GM12878 (cell line): ENCODE measurements at regions of chr11 and their contacts with region 1.

Region 1: DNA sequence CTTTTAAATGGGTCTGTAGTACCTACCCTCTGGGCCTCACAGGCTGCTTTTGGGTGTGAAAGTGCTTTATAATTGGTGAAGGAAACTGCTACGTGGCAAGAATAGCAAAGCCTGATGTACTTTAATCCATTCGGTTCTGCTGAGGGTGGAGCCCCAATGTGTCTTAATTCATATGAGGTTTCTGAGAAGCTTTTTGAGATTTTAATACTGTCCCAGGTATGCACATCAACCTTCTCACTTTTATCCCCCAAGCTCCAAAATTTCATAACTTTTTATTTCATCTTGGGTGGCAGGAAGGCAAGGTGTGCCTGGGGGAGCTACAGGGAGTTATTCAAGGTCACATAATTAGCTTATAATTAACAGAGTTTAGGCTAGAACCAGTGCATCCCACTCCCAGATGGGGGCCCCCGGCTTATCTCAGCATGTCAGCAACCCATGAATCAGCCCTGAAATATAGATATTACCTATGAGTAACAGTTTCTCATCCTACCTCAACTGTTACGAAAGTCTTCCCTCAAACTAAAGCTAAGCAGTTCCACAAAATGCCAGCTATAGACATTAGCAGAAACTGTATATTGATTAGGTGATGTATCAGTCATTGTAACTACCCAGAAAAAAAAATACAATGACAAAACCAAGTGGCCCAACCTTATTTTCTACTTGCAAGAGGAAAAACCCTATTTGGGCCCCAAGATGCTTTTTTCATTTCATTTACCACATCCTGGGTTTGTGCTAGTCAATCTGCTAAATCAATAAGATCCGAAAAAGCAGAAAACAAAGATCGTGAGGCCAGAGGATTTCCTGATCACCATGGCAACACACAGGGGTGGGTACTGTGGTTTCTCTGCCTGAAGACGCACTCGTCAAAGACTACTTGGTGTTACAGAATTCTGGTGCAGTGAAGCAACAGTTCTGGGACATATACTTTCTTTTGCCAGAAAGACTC is 26.7 kb downstream of the CD44 start:
- DNase-seq: peak; percentile 99
- ATAC-seq: peak; percentile 85
- H3K4me3 ChIP-seq: peak overlapping the region; percentile 53
- H3K27ac ChIP-seq: peak overlapping the region; percentile 72
- H3K4me1 ChIP-seq: peaks cover 54% of the 10 kb centered on the region
- H3K27me3 ChIP-seq: no peaks in the 10 kb centered on the region
- CTCF ChIP-seq: no peak
- EP300 ChIP-seq: peak; percentile 60 to 86; a peak in 3 of 4 replicates
- POLR2A ChIP-seq: peak; percentile 41; the same call in 1 of the 2 replicates
- RAD21 ChIP-seq: no peak

Region 2: DNA sequence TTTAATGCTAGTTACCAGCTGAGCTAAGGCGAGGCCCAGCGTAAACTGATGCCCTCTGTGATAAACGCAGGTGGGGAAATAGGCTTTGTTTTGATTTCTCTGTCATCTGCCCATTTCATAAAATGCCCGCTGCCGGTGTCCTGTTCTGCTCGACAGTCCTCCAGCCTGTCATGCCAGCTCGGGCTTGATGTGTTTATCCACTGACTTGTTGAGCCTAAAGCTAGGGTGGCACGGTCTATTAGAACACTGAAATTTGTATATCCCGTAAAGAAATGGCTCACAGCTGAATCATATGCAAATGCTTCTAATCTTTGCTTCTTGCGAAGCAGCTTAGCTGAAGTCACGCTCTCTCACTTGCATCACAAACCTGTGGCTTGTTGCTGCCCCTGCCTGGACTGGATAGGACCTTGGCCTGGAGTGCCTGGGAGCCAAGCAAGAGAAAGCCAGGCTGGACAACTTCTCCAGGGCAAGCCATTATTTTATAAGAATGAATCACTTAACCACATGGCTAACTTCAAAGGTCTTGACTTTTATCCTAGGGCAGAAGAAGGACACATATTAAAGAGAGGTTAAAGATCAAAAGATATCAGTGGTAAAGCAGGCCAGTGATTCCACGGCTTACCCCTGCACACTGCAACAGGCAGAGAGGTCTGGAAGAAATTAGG is 511.7 kb before region 1 on chr11:
- CTCF ChIA-PET with region 1: no interaction called
- POLR2A ChIA-PET with region 1: no interaction called
- RAD21 ChIA-PET with region 1: no interaction called
- SMC1A ChIA-PET with region 1: no interaction called
- in situ Hi-C with region 1: no loop called
- intact Hi-C with region 1: no loop called
- DNase-seq: no peak
- ATAC-seq: no peak
- H3K4me3 ChIP-seq: no peak overlapping the region
- H3K27ac ChIP-seq: no peak overlapping the region
- H3K4me1 ChIP-seq: peaks cover 41% of the 10 kb centered on the region
- H3K27me3 ChIP-seq: no peaks in the 10 kb centered on the region
- CTCF ChIP-seq: no peak
- EP300 ChIP-seq: no peak
- POLR2A ChIP-seq: no peak
- RAD21 ChIP-seq: no peak; the same call in 1 of the 2 replicates

Region 3: GRCh38 chr11:34997952-34998528 is 167.7 kb before region 1 on chr11:
- CTCF ChIA-PET with region 1: interaction called, 39 read pairs
- POLR2A ChIA-PET with region 1: interaction called, 5 read pairs
- RAD21 ChIA-PET with region 1: interaction called, 41 read pairs
- SMC1A ChIA-PET with region 1: interaction called, 234 read pairs
- in situ Hi-C with region 1: no loop called
- intact Hi-C with region 1: no loop called
- DNase-seq: no peak
- ATAC-seq: peak; percentile 74
- H3K4me3 ChIP-seq: no peak overlapping the region
- H3K27ac ChIP-seq: no peak overlapping the region
- H3K4me1 ChIP-seq: peaks cover 8% of the 10 kb centered on the region; the same call in 1 of the 2 replicates
- H3K27me3 ChIP-seq: no peaks in the 10 kb centered on the region
- CTCF ChIP-seq: peak; percentile 24 to 62 (median 41); a peak in 5 of 6 replicates
- EP300 ChIP-seq: no peak
- POLR2A ChIP-seq: no peak
- RAD21 ChIP-seq: peak; percentile 62

Region 4: GRCh38 chr11:35138943-35139721 is 26.6 kb before region 1 on chr11 and contains the start of gene CD44:
- CTCF ChIA-PET with region 1: interaction called, 111 read pairs
- POLR2A ChIA-PET with region 1: interaction called, 6 read pairs
- RAD21 ChIA-PET with region 1: interaction called, 19 read pairs
- SMC1A ChIA-PET with region 1: interaction called, 29 read pairs
- in situ Hi-C with region 1: no loop called
- intact Hi-C with region 1: loop called (anchors 1 kb)
- DNase-seq: no peak
- ATAC-seq: peak; percentile 54
- H3K4me3 ChIP-seq: peak within 1 kb of the TSS; percentile 88
- H3K27ac ChIP-seq: peak within 1 kb of the TSS; percentile 68
- H3K4me1 ChIP-seq: peaks cover 34% of the 10 kb centered on the region
- H3K27me3 ChIP-seq: no peaks in the 10 kb centered on the region
- CTCF ChIP-seq: no peak
- EP300 ChIP-seq: no peak
- POLR2A ChIP-seq: peak; percentile 99
- RAD21 ChIP-seq: no peak
- polyA plus RNA-seq, gene CD44: 57.1 to 65.3 TPM

Region 5: GRCh38 chr11:35151241-35151640 is 14.5 kb before region 1 on chr11:
- CTCF ChIA-PET with region 1: interaction called, 111 read pairs
- POLR2A ChIA-PET with region 1: interaction called, 22 read pairs
- RAD21 ChIA-PET with region 1: interaction called, 38 read pairs
- SMC1A ChIA-PET with region 1: interaction called, 76 read pairs
- in situ Hi-C with region 1: no loop called
- intact Hi-C with region 1: no loop called
- DNase-seq: no peak
- ATAC-seq: no peak
- H3K4me3 ChIP-seq: no peak overlapping the region
- H3K27ac ChIP-seq: no peak overlapping the region
- H3K4me1 ChIP-seq: peaks cover 12% of the 10 kb centered on the region
- H3K27me3 ChIP-seq: no peaks in the 10 kb centered on the region
- CTCF ChIP-seq: no peak
- EP300 ChIP-seq: no peak
- POLR2A ChIP-seq: no peak
- RAD21 ChIP-seq: no peak

Region 6: GRCh38 chr11:35237860-35238715 is 72.4 kb after region 1 on chr11:
- CTCF ChIA-PET with region 1: interaction called, 30 read pairs
- POLR2A ChIA-PET with region 1: no interaction called
- RAD21 ChIA-PET with region 1: interaction called, 25 read pairs
- SMC1A ChIA-PET with region 1: interaction called, 24 read pairs
- in situ Hi-C with region 1: no loop called
- intact Hi-C with region 1: no loop called
- DNase-seq: peak; percentile 35
- ATAC-seq: peak; percentile 70
- H3K4me3 ChIP-seq: no peak overlapping the region
- H3K27ac ChIP-seq: no peak overlapping the region
- H3K4me1 ChIP-seq: peaks cover 19% of the 10 kb centered on the region
- H3K27me3 ChIP-seq: no peaks in the 10 kb centered on the region
- CTCF ChIP-seq: peak; percentile 73 to 82 (median 82)
- EP300 ChIP-seq: no peak
- POLR2A ChIP-seq: no peak
- RAD21 ChIP-seq: peak; percentile 84